ENCODE measurements at regions of chr10 and their contacts with region 1.

Region 1: DNA sequence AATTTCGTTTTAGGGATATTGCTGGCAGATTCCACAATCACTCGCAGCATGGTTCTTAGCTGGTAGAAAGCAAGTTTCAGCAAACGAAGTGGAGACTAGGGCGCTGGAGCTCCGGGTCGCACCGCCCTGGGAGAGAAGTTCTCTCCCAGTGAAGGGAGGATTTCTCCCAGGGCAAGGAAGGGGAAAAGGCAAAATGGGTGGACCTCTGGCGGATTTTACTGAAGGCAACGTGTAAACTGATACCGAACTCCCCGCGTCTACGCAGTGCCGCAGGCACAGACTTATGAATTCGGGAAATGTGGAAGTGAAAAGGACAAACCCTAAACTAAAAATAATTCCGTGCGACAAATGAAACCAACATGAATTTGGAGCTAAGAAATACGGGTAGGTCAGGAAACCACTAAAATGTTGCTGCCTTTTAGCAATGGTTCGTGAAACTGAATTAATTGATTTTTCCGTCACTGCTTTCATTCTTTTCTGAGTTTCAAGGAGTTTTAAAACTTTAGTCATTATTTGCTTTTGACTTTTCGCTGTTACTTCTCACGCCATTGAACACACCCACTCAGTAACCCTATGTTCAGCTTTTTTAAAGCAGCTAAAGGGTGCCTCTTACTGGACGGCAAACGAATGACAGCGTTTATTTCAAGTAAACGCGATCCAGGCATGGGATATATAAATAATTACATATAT is at the start of gene MYOF:
- DNase-seq: peak; percentile 81 to 91 (median 89)
- H3K4me3 ChIP-seq: peak within 1 kb of the TSS in 6 of 7 experiments; percentile 70 to 91 (median 74)
- H3K27ac ChIP-seq: no peak within 1 kb of the TSS
- H3K4me1 ChIP-seq: peaks cover 0 to 11% (median 6%) of the 10 kb centered on the region in 4 experiments
- H3K27me3 ChIP-seq: peaks cover 0 to 18% (median 7%) of the 10 kb centered on the region in 5 experiments

Region 2: GRCh38 chr10:93160829-93161228 is 321.5 kb before region 1 on chr10:
- CTCF ChIA-PET with region 1: no interaction called
- POLR2A ChIA-PET with region 1: no interaction called
- DNase-seq: no peak
- H3K4me3 ChIP-seq: no peak overlapping the region
- H3K27ac ChIP-seq: no peak overlapping the region
- H3K4me1 ChIP-seq: no peaks in the 10 kb centered on the region
- H3K27me3 ChIP-seq: peaks cover 0 to 7% (median 0%) of the 10 kb centered on the region in 5 experiments

Region 3: GRCh38 chr10:93352638-93353383 is 129.5 kb before region 1 on chr10:
- CTCF ChIA-PET with region 1: interaction called, 12 read pairs
- POLR2A ChIA-PET with region 1: no interaction called
- DNase-seq: peak; percentile 45 to 68 (median 59)
- H3K4me3 ChIP-seq: no peak overlapping the region
- H3K27ac ChIP-seq: no peak overlapping the region
- H3K4me1 ChIP-seq: no peaks in the 10 kb centered on the region
- H3K27me3 ChIP-seq: peaks cover 0 to 4% (median 0%) of the 10 kb centered on the region in 5 experiments

Region 4: GRCh38 chr10:93496322-93497041 is 14.2 kb after region 1 on chr10 and contains the start of gene CEP55:
- CTCF ChIA-PET with region 1: interaction called, 18 read pairs
- POLR2A ChIA-PET with region 1: no interaction called
- DNase-seq: peak; percentile 91 to 96 (median 95)
- H3K4me3 ChIP-seq: peak within 1 kb of the TSS; percentile 63 to 96 (median 90)
- H3K27ac ChIP-seq: no peak within 1 kb of the TSS
- H3K4me1 ChIP-seq: peaks cover 4 to 25% (median 16%) of the 10 kb centered on the region in 4 experiments
- H3K27me3 ChIP-seq: peaks cover 0 to 7% (median 3%) of the 10 kb centered on the region in 5 experiments

Region 5: DNA sequence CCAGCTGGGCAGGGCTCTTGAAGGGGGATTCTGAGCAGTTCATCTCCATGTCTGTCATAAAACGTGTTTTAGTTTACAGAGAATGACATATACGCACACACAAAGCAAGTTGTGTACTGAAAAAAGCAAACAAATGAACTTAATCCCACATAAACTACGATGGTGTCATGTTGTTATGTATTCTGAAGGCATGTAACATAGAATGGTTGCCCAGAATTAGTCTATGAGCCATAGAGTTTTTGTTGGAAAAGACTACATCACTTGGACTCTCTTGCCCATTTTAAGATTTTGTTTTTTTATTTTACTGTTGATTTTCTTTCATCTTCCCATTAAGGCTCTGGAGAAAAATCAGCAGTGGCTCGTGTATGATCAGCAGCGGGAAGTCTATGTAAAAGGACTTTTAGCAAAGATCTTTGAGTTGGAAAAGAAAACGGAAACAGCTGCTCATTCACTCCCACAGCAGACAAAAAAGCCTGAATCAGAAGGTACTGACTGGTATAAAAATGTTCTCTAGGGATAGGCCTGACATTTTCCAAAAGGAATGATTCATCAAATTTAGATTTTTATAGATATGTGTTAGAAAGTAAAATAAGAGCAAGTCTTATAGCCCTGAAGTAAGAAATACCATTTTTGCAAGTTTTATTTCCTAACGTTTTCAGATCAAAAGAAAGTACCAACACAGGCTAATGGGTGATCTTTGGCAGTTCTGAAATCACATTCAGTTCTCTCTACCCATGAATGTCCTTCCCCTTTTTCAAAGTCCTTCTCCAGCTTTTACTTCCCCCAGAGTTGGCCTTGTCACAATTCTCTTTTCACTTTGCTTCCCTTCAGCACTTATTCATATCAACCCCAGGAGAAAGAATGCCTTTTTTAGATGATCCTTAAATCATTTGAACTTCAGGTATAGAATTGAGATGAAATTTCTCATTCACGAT is 33.0 kb after region 1 on chr10:
- CTCF ChIA-PET with region 1: interaction called, 21 read pairs
- POLR2A ChIA-PET with region 1: no interaction called
- DNase-seq: peak in 2 of 3 donors; percentile 43 to 55
- H3K4me3 ChIP-seq: no peak overlapping the region
- H3K27ac ChIP-seq: no peak overlapping the region
- H3K4me1 ChIP-seq: peaks cover 0 to 2% (median 1%) of the 10 kb centered on the region in 4 experiments
- H3K27me3 ChIP-seq: no peaks in the 10 kb centered on the region

Region 6: GRCh38 chr10:93742633-93743349 is 260.5 kb after region 1 on chr10:
- CTCF ChIA-PET with region 1: no interaction called
- POLR2A ChIA-PET with region 1: no interaction called
- DNase-seq: peak; percentile 15 to 58 (median 40)
- H3K4me3 ChIP-seq: peak overlapping the region in 6 of 7 experiments; percentile 13 to 67 (median 31)
- H3K27ac ChIP-seq: no peak overlapping the region
- H3K4me1 ChIP-seq: peaks cover 0 to 19% (median 3%) of the 10 kb centered on the region in 4 experiments
- H3K27me3 ChIP-seq: no peaks in the 10 kb centered on the region